ENCODE measurements at regions of chr14 and their contacts with region 1.

Region 1: DNA sequence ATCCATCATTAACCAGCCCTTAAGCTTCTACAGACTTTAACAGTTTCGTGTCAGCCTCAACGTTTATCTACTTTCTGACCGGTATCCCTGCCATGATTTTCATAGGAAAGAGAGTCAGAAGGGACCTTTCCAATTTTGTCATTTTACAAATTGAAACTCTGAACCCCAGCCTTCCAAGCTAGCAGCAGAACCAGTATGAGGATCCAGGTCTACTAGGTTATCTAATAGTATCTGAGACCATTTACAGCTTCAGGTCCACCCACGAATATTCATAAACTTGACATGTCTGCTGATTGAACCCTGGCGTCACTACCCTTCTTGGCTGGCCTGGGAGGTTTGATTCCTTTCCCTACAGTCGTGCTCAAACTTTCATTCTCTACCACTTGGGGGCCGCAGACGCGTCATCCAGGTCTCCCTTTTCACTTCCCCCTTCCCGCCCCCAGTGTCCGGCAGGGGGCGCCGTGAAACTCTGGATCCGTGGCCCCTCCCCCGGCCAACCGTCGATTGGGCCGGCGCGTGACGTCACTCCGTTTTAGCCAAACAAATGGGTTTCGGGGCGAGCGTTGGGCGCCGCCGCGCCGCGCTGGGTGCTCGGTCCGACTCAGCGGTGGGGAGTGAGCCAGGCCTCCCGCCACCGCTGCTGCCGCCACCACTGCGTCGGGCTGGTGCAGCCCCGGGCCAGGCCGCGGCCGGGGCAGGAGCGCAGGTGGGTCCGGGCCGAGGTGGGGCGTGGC is at the start of gene FBXO34:
- DNase-seq: peak; percentile 95 to 98
- ATAC-seq: peak; percentile 80 to 86
- H3K4me3 ChIP-seq: peak within 1 kb of the TSS; percentile 85 to 97 (median 94)
- H3K27ac ChIP-seq: peak within 1 kb of the TSS; percentile 95 to 99 (median 98)
- H3K4me1 ChIP-seq: peaks cover 30 to 33% of the 10 kb centered on the region in 2 donors
- H3K27me3 ChIP-seq: no peaks in the 10 kb centered on the region
- CTCF ChIP-seq: peak; percentile 99 to 100 (median 100)
- POLR2A ChIP-seq: peak; percentile 94 to 98
- total RNA-seq, gene FBXO34: 26.2 to 55.9 (median 40.7) TPM

Region 2: DNA sequence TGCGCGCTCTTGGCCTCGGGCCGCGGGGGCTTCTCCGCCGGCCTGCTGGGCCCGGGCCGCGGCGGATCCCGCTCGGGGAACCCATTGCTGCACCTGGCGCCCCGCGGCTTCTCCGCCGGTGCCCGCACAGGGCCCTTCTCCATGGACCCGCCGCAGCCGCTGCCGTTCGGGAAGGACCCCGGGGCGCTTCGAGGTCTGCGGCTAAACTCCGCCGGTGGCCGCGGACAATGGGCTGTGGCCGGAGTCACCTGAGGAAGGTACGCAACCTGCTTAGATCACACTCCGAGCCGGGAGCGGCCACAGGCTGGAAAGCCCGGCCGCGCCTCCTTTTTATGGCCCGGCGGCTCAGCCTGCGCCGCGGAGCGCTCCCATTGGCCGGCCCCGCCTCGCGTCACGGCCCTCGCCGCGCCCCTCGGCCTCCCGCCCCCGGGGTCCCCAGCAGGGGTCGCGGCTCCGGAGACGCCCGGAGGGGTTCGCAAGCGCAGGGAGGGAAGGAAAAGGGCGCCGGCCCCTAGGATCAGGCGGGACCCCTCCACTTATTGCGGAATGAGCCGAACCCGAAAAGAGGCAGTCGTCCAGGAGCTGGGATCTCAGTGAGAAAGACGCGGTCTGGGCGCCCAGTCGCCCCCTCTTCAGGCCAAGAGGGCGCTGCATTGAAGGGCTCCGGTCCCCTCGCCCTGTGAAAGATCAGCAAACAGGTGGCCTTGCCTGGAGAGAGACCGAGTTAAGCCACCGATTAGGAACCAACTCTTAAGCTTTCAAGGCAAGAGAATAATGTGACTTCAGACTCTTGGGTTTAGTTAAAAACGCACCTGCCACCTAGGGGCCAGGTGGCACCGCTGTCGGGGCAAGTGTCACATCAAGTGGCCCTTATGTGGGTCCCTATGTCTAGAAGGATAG is 368.2 kb before region 1 on chr14 and contains the start of gene GCH1:
- in situ Hi-C with region 1: no loop called
- intact Hi-C with region 1: no loop called
- DNase-seq: peak; percentile 9 to 14
- ATAC-seq: peak; percentile 81 to 88
- H3K4me3 ChIP-seq: peak within 1 kb of the TSS; percentile 68 to 79 (median 74)
- H3K27ac ChIP-seq: peak within 1 kb of the TSS; percentile 62 to 75 (median 73)
- H3K4me1 ChIP-seq: no peaks in the 10 kb centered on the region
- H3K27me3 ChIP-seq: peaks cover 0 to 3% (median 0%) of the 10 kb centered on the region in 3 donors
- CTCF ChIP-seq: peak in 2 of 5 experiments; percentile 28 to 32
- POLR2A ChIP-seq: peak; percentile 61 to 86
- total RNA-seq, gene GCH1: 0.53 to 1.6 (median 0.92) TPM

Region 3: GRCh38 chr14:55051426-55052268 is 219.4 kb before region 1 on chr14 and contains the start of gene MAPK1IP1L:
- in situ Hi-C with region 1: no loop called
- intact Hi-C with region 1: loop called (anchors 1 kb)
- DNase-seq: peak; percentile 76 to 86
- ATAC-seq: peak; percentile 93 to 94
- H3K4me3 ChIP-seq: peak within 1 kb of the TSS; percentile 92 to 97 (median 96)
- H3K27ac ChIP-seq: peak within 1 kb of the TSS; percentile 98 to 100 (median 99)
- H3K4me1 ChIP-seq: peaks cover 17 to 31% of the 10 kb centered on the region in 2 donors
- H3K27me3 ChIP-seq: no peaks in the 10 kb centered on the region
- CTCF ChIP-seq: peak; percentile 96 to 100 (median 100)
- POLR2A ChIP-seq: peak; percentile 93 to 96
- total RNA-seq, gene MAPK1IP1L: 49.9 to 91.4 (median 68.0) TPM

Region 4: GRCh38 chr14:55233591-55233990 is 37.4 kb before region 1 on chr14:
- in situ Hi-C with region 1: no loop called
- intact Hi-C with region 1: no loop called
- DNase-seq: no peak
- ATAC-seq: no peak
- H3K4me3 ChIP-seq: no peak overlapping the region
- H3K27ac ChIP-seq: no peak overlapping the region
- H3K4me1 ChIP-seq: peaks cover 0 to 9% of the 10 kb centered on the region in 2 donors
- H3K27me3 ChIP-seq: no peaks in the 10 kb centered on the region
- CTCF ChIP-seq: no peak
- POLR2A ChIP-seq: no peak

Region 5: DNA sequence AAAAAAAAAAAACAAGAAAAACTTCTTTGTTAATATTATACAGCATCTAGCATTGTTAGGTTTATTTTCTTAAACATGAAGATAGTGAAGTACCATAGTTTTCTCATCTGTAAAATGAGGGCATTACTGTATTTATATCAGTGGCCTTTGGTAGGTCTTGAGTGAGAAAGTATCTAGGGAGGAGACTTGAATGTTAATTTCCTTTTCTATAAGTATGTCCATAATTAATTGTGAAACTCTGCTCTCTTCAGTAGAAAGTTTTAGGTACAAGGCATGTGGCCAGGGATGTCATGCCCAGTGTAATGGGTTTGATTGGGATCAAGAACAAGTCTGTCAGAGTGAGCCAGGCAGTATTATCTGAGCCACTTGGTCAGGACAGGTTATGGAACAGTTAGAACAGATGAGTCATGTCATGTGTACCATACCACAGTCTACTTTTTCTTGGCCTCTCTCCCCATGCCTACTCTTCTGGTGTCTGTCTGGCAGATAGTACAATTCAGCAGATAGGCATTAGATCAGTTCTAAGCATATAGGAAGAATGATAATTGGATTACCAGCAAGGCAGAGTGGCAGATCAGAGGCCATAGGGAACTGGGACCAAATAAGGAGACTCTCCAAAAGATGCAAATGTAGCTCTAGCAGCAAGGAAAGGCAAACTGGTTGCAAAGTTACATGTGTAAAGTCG is 30.6 kb after region 1 on chr14:
- in situ Hi-C with region 1: no loop called
- intact Hi-C with region 1: loop called (anchors 1 kb)
- DNase-seq: peak; percentile 70 to 74
- ATAC-seq: peak; percentile 91 to 93
- H3K4me3 ChIP-seq: peak overlapping the region in 2 of 4 donors; percentile 14 to 17
- H3K27ac ChIP-seq: peak overlapping the region; percentile 85 to 93 (median 90)
- H3K4me1 ChIP-seq: peaks cover 74 to 77% of the 10 kb centered on the region in 2 donors
- H3K27me3 ChIP-seq: no peaks in the 10 kb centered on the region
- CTCF ChIP-seq: no peak
- POLR2A ChIP-seq: no peak

Region 6: GRCh38 chr14:55398679-55399078 is 127.7 kb after region 1 on chr14:
- in situ Hi-C with region 1: loop called in 1 of 4 experiments (anchors 10 kb)
- intact Hi-C with region 1: no loop called
- DNase-seq: peak; percentile 71 to 73
- ATAC-seq: peak; percentile 99 to 100
- H3K4me3 ChIP-seq: no peak overlapping the region
- H3K27ac ChIP-seq: peak overlapping the region; percentile 73 to 82 (median 80)
- H3K4me1 ChIP-seq: peaks cover 29 to 35% of the 10 kb centered on the region in 2 donors
- H3K27me3 ChIP-seq: no peaks in the 10 kb centered on the region
- CTCF ChIP-seq: no peak
- POLR2A ChIP-seq: peak in 1 of 2 donors; percentile 81

Region 7: DNA sequence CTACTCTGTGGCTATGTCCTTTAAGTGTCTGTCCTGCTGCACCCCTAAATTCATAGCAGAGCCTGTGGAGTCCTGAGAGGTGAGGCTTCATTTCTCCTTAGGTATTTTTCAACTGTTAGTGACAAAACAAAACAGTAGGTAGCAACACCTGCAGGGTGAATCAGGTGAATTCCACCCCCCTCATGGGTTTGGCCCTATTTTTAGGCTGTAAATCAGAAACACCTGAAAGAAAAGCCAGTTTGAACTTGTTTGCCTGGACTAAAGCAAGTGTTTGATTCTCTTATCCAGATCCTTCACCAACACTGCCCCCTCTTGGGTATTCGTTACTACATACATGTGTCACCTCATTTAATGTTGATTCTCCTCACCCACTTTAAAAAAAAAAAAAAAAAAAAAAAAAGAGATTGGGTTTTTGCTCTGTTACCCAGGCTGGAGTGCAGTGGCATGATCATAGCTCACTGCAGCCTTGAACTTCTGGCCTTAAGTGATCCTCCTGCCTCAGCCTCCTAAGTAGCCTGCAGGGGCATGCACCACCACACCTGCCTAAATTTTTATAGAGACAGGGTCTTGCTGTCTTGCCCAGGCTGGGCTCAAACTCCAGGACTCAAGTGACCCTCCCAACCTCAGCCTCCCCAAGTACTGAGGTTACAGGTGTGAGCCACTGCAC is 159.2 kb after region 1 on chr14:
- in situ Hi-C with region 1: no loop called
- intact Hi-C with region 1: loop called (anchors 1 kb)
- DNase-seq: peak in 1 of 2 donors; percentile 20
- ATAC-seq: peak; percentile 95 to 96
- H3K4me3 ChIP-seq: no peak overlapping the region
- H3K27ac ChIP-seq: peak overlapping the region in 1 of 4 donors; percentile 2
- H3K4me1 ChIP-seq: no peaks in the 10 kb centered on the region
- H3K27me3 ChIP-seq: no peaks in the 10 kb centered on the region
- CTCF ChIP-seq: peak; percentile 18 to 62 (median 51)
- POLR2A ChIP-seq: no peak

Region 8: DNA sequence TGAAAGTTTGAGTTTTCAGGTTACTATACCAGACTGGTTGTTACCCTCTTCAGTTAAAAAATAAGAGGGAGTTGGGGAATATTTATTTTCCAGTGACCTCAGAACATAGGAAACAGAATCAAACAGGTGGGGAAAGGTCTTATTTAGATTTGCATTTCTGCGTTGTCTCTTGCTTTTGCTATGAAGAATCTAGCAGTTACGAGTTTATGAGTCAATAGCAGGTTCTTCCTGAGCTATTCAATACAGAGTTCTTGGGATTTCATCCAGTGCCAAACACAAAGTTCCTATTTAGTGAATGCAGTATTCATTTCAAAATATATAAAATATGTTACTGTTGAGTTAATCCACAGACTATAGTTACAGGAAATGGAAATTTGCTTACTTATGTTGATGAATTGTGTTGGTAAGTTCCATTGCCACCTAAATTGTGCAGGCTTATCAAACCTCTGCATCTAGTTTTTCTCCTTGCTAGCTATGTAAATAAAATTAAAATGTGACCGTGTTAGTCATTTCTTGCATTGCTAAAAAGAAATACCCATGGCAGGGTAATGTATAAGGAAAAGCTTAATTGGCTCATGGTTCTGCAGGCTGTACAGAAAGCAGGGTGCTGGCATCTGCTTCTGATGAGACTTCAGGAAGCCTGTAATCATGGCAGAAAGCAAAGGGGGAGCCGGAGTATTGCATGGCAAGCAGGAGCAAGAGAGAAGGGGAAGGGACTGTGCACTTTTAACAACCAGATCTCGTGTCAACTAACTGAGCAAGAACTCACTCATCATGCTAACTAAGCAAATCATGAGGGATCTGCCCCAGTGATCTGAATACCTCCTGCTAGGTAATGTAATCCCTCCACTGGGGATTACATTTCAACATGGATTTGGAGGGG is 419.2 kb after region 1 on chr14:
- in situ Hi-C with region 1: no loop called
- intact Hi-C with region 1: loop called (anchors 10 kb)
- DNase-seq: no peak
- ATAC-seq: peak; percentile 49 to 70
- H3K4me3 ChIP-seq: no peak overlapping the region
- H3K27ac ChIP-seq: peak overlapping the region in 1 of 4 donors; percentile 32
- H3K4me1 ChIP-seq: peaks cover 24% of the 10 kb centered on the region in 2 donors
- H3K27me3 ChIP-seq: no peaks in the 10 kb centered on the region
- CTCF ChIP-seq: no peak
- POLR2A ChIP-seq: no peak

Measured in gastrocnemius medialis (tissue), 4 donors.